Activated B cell treated with CpG ODN at 0.5 μM for 24 hours (primary cell): ENCODE measurements at regions of chr22 and their contacts with region 1.

Region 1: DNA sequence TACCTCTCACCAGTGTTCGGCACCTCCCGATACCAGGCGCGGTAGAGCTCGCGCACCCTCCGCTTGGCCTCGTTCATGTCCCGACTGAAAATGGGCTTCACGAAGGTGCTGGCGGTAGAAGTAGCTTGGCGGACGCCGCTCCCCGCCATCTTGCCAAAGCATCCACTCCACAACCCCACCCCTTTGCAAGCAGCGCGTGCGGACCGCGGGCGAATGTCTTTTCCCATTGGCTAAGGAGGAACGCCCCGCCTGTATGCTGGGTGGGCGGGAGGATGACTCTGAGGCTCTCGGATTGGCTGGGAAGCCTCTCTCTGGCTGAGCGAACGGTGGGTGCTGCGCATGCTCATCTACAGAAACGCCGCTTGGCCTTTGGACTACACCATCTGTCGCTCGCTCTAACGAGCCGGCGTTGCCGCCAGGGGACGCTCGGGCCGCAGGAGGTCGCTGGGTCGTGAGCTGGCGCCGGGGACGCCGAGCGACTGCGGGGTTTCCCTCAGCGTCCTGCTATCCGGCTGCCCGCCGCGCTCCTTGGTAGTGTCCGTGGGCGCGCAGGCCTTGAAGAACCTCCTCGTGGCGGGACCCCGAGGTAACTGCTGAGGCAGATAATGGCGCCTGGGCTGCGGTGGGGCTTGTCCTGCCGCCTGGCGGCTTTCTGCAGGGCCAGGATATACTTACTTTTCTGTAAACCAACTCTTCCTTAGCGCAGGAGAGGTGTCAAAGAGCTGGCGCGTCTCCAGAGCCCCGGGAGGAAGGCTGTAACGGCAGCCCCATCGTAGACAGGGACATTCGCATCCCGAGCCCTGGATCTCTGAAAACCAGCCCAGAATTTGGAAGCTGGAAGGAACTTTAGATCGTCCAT is at the start of gene NDUFA6:
- DNase-seq: peak; percentile 93
- ATAC-seq: peak; percentile 88
- H3K4me3 Mint-ChIP-seq: peak within 1 kb of the TSS; percentile 97
- H3K27ac Mint-ChIP-seq: peak within 1 kb of the TSS; percentile 98
- H3K4me1 Mint-ChIP-seq: peaks cover 32% of the 10 kb centered on the region
- H3K27me3 Mint-ChIP-seq: no peaks in the 10 kb centered on the region
- CTCF ChIP-seq: peak; percentile 44
- total RNA-seq, gene NDUFA6: 73.6 and 83.2 TPM in 2 replicates

Region 2: DNA sequence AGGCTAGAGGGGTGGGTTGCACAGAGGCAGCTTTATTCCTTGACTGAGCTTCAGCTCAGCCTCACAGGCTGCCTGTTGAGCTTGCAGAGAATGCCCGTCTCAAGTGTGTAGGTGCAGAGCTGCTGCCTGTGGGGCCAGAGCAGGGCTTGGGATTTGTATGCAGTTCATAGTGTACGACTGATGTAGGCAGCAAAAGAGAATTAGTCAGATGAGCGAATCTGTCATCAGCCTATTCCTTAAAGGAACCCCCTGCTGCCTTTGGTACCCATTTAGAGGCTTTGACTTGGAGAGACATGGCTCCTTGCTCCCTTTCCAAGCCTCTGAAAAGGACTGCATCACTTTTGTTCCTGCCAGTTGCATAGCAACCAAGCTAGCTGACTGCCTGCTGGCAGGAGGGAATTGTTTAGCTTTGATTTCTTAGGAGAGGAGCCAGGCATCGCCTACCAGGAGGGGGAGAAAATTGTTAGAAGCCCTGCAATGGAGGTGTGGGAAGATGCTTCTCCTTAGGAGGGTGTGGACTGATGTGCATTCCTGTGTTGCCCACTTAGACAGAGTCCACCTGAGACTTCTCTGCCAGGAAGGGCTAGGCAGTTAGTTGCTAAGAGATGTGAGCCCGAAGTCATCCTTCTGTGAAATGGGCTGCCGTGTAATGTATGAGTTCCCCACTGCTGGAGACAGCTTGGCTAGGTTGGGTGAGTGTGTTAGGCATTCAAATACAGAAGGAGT is 611.0 kb before region 1 on chr22:
- CTCF ChIA-PET with region 1: no interaction called
- POLR2A ChIA-PET with region 1: no interaction called
- intact Hi-C with region 1: no loop called
- DNase-seq: no peak
- ATAC-seq: no peak
- H3K4me3 Mint-ChIP-seq: peak overlapping the region; percentile 79
- H3K27ac Mint-ChIP-seq: peak overlapping the region; percentile 96
- H3K4me1 Mint-ChIP-seq: peaks cover 87% of the 10 kb centered on the region
- H3K27me3 Mint-ChIP-seq: no peaks in the 10 kb centered on the region
- CTCF ChIP-seq: no peak

Region 3: DNA sequence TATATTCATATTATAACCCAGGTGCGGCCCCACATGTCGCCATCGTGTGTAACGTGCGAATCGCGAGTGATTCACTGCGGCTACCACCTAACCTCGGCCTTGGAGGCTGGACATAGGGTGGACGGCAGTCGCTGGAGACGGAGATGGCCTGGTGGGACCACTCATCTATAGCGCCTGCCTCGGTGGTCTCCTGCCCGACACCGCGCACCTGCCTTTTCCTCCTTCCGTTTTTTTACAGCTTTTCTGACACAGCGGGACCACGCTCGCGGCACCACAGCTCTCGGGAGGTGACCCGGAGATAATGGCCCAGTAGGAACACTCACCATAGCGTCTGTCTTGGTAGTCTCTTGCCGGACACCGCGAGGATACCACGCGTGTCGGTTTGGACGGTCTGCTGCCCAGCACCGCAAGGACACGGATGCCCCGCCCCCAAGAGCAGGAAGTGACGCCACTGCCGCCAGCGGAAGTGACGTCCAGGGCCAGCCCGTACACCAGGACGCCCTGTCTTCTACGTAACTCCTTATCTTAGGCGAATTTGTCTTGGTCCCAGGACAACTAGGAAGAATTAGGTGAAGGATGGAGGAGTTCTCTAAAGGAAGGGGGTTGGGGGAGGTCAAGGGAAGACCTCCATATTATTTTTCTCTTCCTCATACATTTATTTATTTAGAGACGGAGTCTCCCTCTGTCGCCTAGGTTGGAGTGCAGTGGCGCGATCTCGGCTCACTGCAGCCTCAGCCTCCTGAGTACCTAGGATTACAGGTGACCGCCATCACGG is 408.6 kb before region 1 on chr22:
- CTCF ChIA-PET with region 1: no interaction called
- POLR2A ChIA-PET with region 1: no interaction called
- intact Hi-C with region 1: no loop called
- DNase-seq: peak; percentile 87
- ATAC-seq: peak; percentile 87
- H3K4me3 Mint-ChIP-seq: peak overlapping the region; percentile 94
- H3K27ac Mint-ChIP-seq: peak overlapping the region; percentile 95
- H3K4me1 Mint-ChIP-seq: peaks cover 21% of the 10 kb centered on the region
- H3K27me3 Mint-ChIP-seq: no peaks in the 10 kb centered on the region
- CTCF ChIP-seq: no peak

Region 4: DNA sequence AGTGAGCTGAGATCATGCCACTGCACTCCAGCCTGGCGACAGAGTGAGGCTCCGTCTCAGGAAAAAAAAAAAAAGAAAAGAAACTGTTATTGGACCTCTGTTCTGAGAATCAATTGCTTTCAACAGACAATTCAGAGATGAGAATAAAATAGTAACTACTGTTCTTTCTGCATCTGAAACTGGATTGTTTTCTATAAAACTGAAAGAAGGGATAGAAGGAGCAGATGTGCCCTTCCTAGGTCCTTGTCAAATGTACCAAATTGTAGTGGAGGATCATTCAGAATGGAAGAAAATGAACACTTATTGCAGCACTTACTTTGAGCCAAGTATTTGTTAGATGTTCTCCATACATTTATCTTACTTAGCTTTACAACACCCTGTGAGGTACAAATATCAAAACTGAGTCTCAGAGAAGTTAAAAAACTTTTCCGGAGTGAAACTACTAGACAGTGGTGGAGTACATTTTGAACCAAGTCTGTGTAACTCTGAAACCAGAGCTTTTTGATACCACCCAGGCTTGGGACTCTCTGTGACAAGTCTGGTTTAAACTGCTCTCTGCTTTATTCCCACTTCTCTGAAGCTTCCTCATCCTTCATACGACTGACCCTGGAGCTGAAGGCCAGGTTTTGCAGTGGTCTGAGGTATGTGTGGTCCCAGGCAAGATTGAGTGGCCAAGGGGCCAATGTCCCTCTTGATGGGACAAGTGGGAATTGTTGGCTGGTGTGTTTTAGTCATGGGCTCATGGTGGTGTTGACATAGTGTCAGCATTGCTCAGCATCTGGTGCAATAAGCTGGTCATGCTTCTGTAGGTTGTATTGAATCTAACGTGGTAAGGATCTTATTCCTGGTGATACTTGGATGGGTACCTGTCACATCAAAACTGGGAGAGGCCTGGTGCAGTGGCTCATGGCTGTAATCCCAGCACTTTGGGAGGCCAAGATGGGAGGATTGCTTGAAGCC is 338.5 kb before region 1 on chr22:
- CTCF ChIA-PET with region 1: no interaction called
- POLR2A ChIA-PET with region 1: no interaction called
- intact Hi-C with region 1: no loop called
- DNase-seq: no peak
- ATAC-seq: no peak
- H3K4me3 Mint-ChIP-seq: no peak overlapping the region
- H3K27ac Mint-ChIP-seq: peak overlapping the region; percentile 41
- H3K4me1 Mint-ChIP-seq: peaks cover 13% of the 10 kb centered on the region
- H3K27me3 Mint-ChIP-seq: no peaks in the 10 kb centered on the region
- CTCF ChIP-seq: no peak

Region 5: DNA sequence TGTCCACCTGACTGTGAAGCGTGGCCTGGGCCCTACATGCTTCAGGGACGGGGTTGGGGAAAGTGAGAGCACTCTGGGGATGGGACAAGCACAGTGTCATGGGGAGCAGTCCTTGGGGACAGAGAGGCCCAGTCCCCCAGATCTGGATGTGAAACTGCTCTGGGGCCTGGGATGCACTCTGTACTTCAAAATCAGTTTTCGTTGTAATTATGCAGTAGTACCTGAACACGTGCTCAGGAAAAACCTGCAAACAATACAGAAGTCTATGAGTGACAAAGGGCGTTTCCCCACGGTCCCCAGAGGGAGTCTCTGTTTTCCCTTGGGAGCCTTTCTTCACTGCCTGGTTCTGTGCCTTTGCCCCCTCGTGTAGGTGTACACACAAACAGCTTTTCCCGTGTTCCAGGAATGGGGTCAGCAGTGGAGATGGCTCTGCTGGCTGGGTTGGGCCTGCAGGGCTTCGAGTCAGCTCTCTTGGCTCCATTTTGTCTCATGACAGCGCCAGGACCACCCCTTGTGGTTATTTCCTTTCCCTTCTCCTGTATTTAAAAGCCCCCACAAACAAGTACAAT is 159.0 kb before region 1 on chr22:
- CTCF ChIA-PET with region 1: no interaction called
- POLR2A ChIA-PET with region 1: interaction called, 12 read pairs
- intact Hi-C with region 1: no loop called
- DNase-seq: peak; percentile 72
- ATAC-seq: peak; percentile 35
- H3K4me3 Mint-ChIP-seq: peak overlapping the region; percentile 52
- H3K27ac Mint-ChIP-seq: peak overlapping the region; percentile 100
- H3K4me1 Mint-ChIP-seq: peaks cover 97% of the 10 kb centered on the region
- H3K27me3 Mint-ChIP-seq: no peaks in the 10 kb centered on the region
- CTCF ChIP-seq: no peak

Region 6: GRCh38 chr22:42033263-42034181 is 57.3 kb before region 1 on chr22:
- CTCF ChIA-PET with region 1: no interaction called
- POLR2A ChIA-PET with region 1: interaction called, 14 read pairs
- intact Hi-C with region 1: loop called (anchors 1 kb)
- DNase-seq: no peak
- ATAC-seq: no peak
- H3K4me3 Mint-ChIP-seq: no peak overlapping the region
- H3K27ac Mint-ChIP-seq: no peak overlapping the region
- H3K4me1 Mint-ChIP-seq: peaks cover 35% of the 10 kb centered on the region
- H3K27me3 Mint-ChIP-seq: no peaks in the 10 kb centered on the region
- CTCF ChIP-seq: no peak

Region 7: DNA sequence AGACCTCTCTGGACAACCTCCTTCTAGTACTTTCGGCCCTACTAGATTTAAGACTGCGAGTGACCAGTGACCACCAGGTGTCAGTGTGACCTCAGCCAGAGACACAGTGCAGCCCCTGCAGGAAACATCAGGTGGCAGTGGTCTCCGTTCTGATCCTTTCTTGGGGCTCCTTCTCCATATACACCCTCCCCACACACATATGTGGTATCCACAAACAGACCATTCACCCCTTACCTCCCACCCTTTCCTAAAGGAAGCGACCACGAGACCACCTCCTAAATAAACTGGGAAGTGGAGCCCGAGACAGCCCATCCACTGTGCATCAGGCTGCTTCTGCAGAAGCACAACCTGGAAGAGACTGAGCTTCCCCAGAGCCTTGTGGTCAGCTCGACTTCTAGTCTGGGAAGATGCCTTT is 78.2 kb after region 1 on chr22:
- CTCF ChIA-PET with region 1: interaction called, 3 read pairs
- POLR2A ChIA-PET with region 1: interaction called, 5 read pairs
- intact Hi-C with region 1: loop called (anchors 10 kb)
- DNase-seq: peak; percentile 48
- ATAC-seq: peak; percentile 79
- H3K4me3 Mint-ChIP-seq: no peak overlapping the region
- H3K27ac Mint-ChIP-seq: no peak overlapping the region
- H3K4me1 Mint-ChIP-seq: peaks cover 34% of the 10 kb centered on the region
- H3K27me3 Mint-ChIP-seq: no peaks in the 10 kb centered on the region
- CTCF ChIP-seq: no peak

Region 8: GRCh38 chr22:42444077-42444904 is 353.5 kb after region 1 on chr22:
- CTCF ChIA-PET with region 1: interaction called, 36 read pairs
- POLR2A ChIA-PET with region 1: interaction called, 24 read pairs
- intact Hi-C with region 1: loop called (anchors 1 kb)
- DNase-seq: peak; percentile 58
- ATAC-seq: peak; percentile 84
- H3K4me3 Mint-ChIP-seq: peak overlapping the region; percentile 69
- H3K27ac Mint-ChIP-seq: no peak overlapping the region
- H3K4me1 Mint-ChIP-seq: peaks cover 33% of the 10 kb centered on the region
- H3K27me3 Mint-ChIP-seq: peaks cover 7% of the 10 kb centered on the region
- CTCF ChIP-seq: no peak